IMR-90 (cell line): ENCODE measurements at regions of chr9 and their contacts with region 1.

Region 1: DNA sequence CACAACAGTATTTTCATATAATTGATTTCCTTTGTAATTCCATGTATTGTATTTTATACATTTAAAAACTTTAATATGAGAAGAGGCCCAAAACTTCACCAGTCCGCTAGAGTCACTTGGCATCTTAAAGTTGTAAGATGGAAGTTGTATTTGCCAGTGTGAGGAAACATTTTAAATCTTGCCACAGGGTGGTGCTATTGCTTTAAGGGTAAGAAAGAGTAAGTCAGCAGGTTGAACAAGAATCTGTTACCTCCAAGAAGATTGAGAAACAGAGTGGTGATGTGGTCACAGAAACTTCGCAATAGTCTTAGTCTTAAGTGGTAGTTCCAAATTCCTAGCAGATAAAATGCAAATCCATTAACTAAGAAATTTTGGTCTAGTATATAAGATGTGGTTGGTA is 39.8 kb upstream of the RANBP6 start:
- DNase-seq: peak; percentile 91
- ATAC-seq: peak; percentile 84
- H3K4me3 ChIP-seq: no peak overlapping the region
- H3K27ac ChIP-seq: no peak overlapping the region
- H3K4me1 ChIP-seq: no peaks in the 10 kb centered on the region
- H3K27me3 ChIP-seq: no peaks in the 10 kb centered on the region; the same call in 1 of the 2 replicates
- CTCF ChIP-seq: peak; percentile 71
- POLR2A ChIP-seq: no peak
- RAD21 ChIP-seq: peak; percentile 76

Region 2: DNA sequence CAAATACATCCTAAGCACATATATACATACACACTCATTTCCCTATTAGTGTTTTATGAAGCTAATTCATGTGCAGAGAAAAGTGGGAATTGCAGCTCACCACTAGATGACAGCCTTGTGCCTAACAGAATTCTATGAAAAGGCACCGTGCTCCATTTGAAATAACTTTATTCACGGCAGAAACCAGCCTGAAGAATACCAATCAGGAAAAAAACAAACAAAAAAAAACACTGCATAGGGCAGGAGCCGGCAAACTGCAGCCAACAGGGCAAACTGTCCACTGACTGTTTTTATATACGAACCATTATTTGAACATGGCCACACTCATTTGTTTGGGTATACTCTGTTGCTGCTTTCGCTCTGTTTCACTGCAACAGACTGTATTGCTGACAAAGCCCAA is 255.9 kb before region 1 on chr9:
- CTCF ChIA-PET with region 1: interaction called, 5 read pairs
- POLR2A ChIA-PET with region 1: no interaction called
- dilution Hi-C with region 1: no loop called
- in situ Hi-C with region 1: no loop called
- intact Hi-C with region 1: loop called (anchors 1 kb)
- DNase-seq: peak; percentile 59
- ATAC-seq: peak; percentile 75
- H3K4me3 ChIP-seq: 0 out of 2 replicates have a peak overlapping the region, but pooled peaks have one; percentile 19
- H3K27ac ChIP-seq: no peak overlapping the region
- H3K4me1 ChIP-seq: no peaks in the 10 kb centered on the region
- H3K27me3 ChIP-seq: no peaks in the 10 kb centered on the region
- CTCF ChIP-seq: peak; percentile 78
- POLR2A ChIP-seq: no peak
- RAD21 ChIP-seq: peak; percentile 72

Region 3: DNA sequence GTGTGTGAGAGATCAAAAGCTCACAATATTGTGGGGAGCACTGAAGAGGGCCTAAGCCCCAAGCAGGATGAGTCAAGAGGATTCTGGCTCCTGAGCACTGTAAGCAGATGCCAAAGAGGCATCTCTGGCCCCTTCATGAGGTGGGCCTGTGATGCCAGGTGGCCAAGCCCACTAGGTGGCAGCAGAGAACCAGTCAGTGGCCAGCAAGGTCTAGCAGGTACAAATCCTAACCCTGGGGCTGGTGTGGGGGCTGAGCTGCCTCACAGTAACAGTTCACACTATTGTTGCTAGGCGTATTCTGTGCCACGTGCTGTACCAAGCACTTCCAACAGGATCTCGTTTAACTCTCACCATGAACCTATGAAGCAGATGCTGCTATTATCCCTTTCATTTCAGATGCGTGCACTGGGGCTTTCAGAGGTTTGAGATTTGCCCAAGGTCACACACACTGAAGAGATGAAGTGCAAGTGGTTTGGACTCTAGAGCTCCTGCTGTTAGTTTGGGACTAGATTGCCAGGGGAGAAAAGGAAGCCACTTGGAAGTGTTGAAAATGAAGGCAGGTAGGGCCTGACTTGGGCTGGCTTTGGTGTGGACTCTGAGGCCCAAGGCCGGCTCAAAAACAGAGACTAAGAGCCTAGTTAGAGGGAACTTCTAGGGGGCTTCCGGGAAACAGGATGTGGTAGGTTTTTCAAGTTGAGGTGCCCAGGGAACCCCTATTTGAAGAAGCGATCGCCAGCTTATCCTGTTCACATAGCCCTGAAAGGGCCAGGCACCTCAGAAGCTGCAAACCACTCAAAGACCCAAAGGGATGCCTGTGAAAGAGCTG is 168.9 kb before region 1 on chr9:
- CTCF ChIA-PET with region 1: interaction called, 12 read pairs
- POLR2A ChIA-PET with region 1: no interaction called
- dilution Hi-C with region 1: no loop called
- in situ Hi-C with region 1: no loop called
- intact Hi-C with region 1: loop called (anchors 1 kb)
- DNase-seq: peak; percentile 65
- ATAC-seq: peak; percentile 99
- H3K4me3 ChIP-seq: no peak overlapping the region
- H3K27ac ChIP-seq: no peak overlapping the region
- H3K4me1 ChIP-seq: no peaks in the 10 kb centered on the region
- H3K27me3 ChIP-seq: peaks cover 11% of the 10 kb centered on the region
- CTCF ChIP-seq: peak; percentile 93
- POLR2A ChIP-seq: 0 out of 2 replicates have a peak, but pooled peaks have one; percentile 33
- RAD21 ChIP-seq: peak; percentile 90

Region 4: DNA sequence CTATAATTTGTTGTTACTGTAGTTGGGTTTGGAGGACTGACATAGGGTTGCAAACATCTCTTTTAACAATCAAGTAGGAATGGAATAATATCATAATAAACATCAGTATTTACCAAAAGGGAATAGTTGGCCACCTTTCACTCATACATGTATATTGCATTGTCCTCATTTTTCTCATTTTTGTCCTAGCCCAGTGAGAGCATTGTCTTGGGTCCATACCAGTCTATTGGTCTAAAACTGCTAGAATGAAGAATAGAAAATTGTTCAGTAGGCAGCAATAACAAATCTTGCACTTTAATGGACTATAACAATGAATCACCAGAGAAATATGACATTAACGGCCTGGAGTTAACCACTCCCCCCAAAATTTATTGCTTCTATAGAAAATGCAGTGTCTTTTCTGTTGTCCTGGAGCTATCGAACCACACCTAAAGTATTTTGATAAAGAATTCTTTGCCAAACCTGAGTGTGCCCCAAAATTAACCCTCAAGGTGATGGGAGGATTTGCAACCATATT is 79.5 kb after region 1 on chr9:
- CTCF ChIA-PET with region 1: no interaction called
- POLR2A ChIA-PET with region 1: no interaction called
- dilution Hi-C with region 1: no loop called
- in situ Hi-C with region 1: no loop called
- intact Hi-C with region 1: no loop called
- DNase-seq: no peak
- ATAC-seq: peak; percentile 54; the same call in 1 of the 2 replicates
- H3K4me3 ChIP-seq: no peak overlapping the region
- H3K27ac ChIP-seq: no peak overlapping the region
- H3K4me1 ChIP-seq: no peaks in the 10 kb centered on the region
- H3K27me3 ChIP-seq: no peaks in the 10 kb centered on the region
- CTCF ChIP-seq: no peak
- POLR2A ChIP-seq: no peak
- RAD21 ChIP-seq: no peak

Region 5: GRCh38 chr9:6184749-6185645 is 129.8 kb after region 1 on chr9:
- CTCF ChIA-PET with region 1: no interaction called
- POLR2A ChIA-PET with region 1: no interaction called
- dilution Hi-C with region 1: no loop called
- in situ Hi-C with region 1: no loop called
- intact Hi-C with region 1: no loop called
- DNase-seq: peak; percentile 8
- ATAC-seq: peak; percentile 42; the same call in 1 of the 2 replicates
- H3K4me3 ChIP-seq: no peak overlapping the region
- H3K27ac ChIP-seq: no peak overlapping the region
- H3K4me1 ChIP-seq: no peaks in the 10 kb centered on the region
- H3K27me3 ChIP-seq: no peaks in the 10 kb centered on the region
- CTCF ChIP-seq: no peak
- POLR2A ChIP-seq: no peak
- RAD21 ChIP-seq: no peak

Region 6: GRCh38 chr9:6197330-6197729 is 142.1 kb after region 1 on chr9:
- CTCF ChIA-PET with region 1: no interaction called
- POLR2A ChIA-PET with region 1: no interaction called
- dilution Hi-C with region 1: no loop called
- in situ Hi-C with region 1: no loop called
- intact Hi-C with region 1: loop called (anchors 1 kb)
- DNase-seq: peak; percentile 5
- ATAC-seq: no peak
- H3K4me3 ChIP-seq: no peak overlapping the region
- H3K27ac ChIP-seq: no peak overlapping the region
- H3K4me1 ChIP-seq: no peaks in the 10 kb centered on the region
- H3K27me3 ChIP-seq: peaks cover 7% of the 10 kb centered on the region; the same call in 1 of the 2 replicates
- CTCF ChIP-seq: peak; percentile 38
- POLR2A ChIP-seq: no peak
- RAD21 ChIP-seq: peak; percentile 40; the same call in 1 of the 2 replicates

Region 7: GRCh38 chr9:6272229-6272598 is 217.0 kb after region 1 on chr9:
- CTCF ChIA-PET with region 1: no interaction called
- POLR2A ChIA-PET with region 1: no interaction called
- dilution Hi-C with region 1: no loop called
- in situ Hi-C with region 1: no loop called
- intact Hi-C with region 1: loop called (anchors 1 kb)
- DNase-seq: peak; percentile 93
- ATAC-seq: peak; percentile 97
- H3K4me3 ChIP-seq: no peak overlapping the region
- H3K27ac ChIP-seq: no peak overlapping the region
- H3K4me1 ChIP-seq: peaks cover 4% of the 10 kb centered on the region; the same call in 1 of the 2 replicates
- H3K27me3 ChIP-seq: peaks cover 18% of the 10 kb centered on the region
- CTCF ChIP-seq: no peak
- POLR2A ChIP-seq: no peak
- RAD21 ChIP-seq: no peak

Region 8: GRCh38 chr9:6305954-6306563 is 250.8 kb after region 1 on chr9:
- CTCF ChIA-PET with region 1: interaction called, 15 read pairs
- POLR2A ChIA-PET with region 1: no interaction called
- dilution Hi-C with region 1: no loop called
- in situ Hi-C with region 1: loop called (anchors 5 kb)
- intact Hi-C with region 1: loop called (anchors 1 kb)
- DNase-seq: peak; percentile 50
- ATAC-seq: peak; percentile 78
- H3K4me3 ChIP-seq: no peak overlapping the region
- H3K27ac ChIP-seq: no peak overlapping the region
- H3K4me1 ChIP-seq: no peaks in the 10 kb centered on the region
- H3K27me3 ChIP-seq: peaks cover 2% of the 10 kb centered on the region; the same call in 1 of the 2 replicates
- CTCF ChIP-seq: peak; percentile 61
- POLR2A ChIP-seq: no peak
- RAD21 ChIP-seq: peak; percentile 69

Region 9: DNA sequence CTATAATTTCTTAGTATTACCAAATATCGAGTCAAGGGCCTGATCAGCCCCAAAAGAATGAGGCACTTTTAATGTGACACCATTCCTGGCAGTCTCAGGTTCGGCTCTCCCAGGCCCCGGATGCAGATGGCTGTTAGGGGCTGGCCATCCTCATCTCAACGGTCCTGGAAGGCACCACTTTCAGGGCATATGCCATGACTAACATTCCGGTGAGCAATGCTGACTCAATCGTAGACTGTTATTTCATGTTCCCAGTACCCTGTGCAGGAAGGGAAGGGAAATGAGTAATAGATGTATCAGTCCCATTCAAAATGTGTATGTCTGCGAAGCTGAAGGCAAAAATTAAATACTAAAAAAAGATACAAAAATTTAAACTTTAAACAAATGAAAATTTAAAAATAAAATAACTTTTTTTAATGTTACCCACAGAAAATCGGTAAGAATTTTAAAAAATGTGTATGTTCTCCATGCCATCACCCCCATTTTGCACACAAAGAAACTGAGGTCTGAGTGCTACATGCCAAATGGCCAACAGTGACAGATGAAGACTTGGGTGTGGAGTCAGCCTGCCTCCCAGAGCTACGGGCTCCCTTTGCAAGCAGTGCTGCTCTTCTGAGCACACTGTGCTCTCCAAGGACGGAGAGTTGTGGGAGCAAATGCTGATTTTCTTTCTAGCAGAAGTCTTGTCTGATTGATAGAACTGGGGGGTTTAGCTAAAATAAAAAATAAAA is 511.4 kb after region 1 on chr9:
- CTCF ChIA-PET with region 1: interaction called, 3 read pairs
- POLR2A ChIA-PET with region 1: no interaction called
- dilution Hi-C with region 1: no loop called
- in situ Hi-C with region 1: no loop called
- intact Hi-C with region 1: loop called (anchors 5 kb)
- DNase-seq: peak; percentile 99
- ATAC-seq: peak; percentile 85
- H3K4me3 ChIP-seq: peak overlapping the region; percentile 38; the same call in 1 of the 2 replicates
- H3K27ac ChIP-seq: peak overlapping the region; percentile 98
- H3K4me1 ChIP-seq: peaks cover 12% of the 10 kb centered on the region
- H3K27me3 ChIP-seq: no peaks in the 10 kb centered on the region
- CTCF ChIP-seq: no peak
- POLR2A ChIP-seq: peak; percentile 52; the same call in 1 of the 2 replicates
- RAD21 ChIP-seq: 0 out of 2 replicates have a peak, but pooled peaks have one; percentile 11